Activated naive CD4-positive, alpha-beta T cell treated with anti-CD3 and anti-CD28 coated beads, Interleukin-2, amount 10 ng/mL, durations not matched to agents 7 days and 5 days (primary cell): ENCODE measurements at regions of chr12 and their contacts with region 1.

Region 1: GRCh38 chr12:810671-811415 is 58.5 kb downstream of the WNK1 start:
- DNase-seq: no peak
- H3K4me3 Mint-ChIP-seq: no peak overlapping the region
- H3K27ac Mint-ChIP-seq: no peak overlapping the region
- H3K4me1 Mint-ChIP-seq: peaks cover 64% of the 10 kb centered on the region
- H3K27me3 Mint-ChIP-seq: no peaks in the 10 kb centered on the region

Region 2: GRCh38 chr12:569803-570434 is 240.9 kb before region 1 on chr12:
- CTCF ChIA-PET with region 1: interaction called, 72 read pairs
- DNase-seq: peak; percentile 90
- H3K4me3 Mint-ChIP-seq: peak overlapping the region; percentile 78
- H3K27ac Mint-ChIP-seq: no peak overlapping the region
- H3K4me1 Mint-ChIP-seq: peaks cover 78% of the 10 kb centered on the region
- H3K27me3 Mint-ChIP-seq: peaks cover 3% of the 10 kb centered on the region

Region 3: DNA sequence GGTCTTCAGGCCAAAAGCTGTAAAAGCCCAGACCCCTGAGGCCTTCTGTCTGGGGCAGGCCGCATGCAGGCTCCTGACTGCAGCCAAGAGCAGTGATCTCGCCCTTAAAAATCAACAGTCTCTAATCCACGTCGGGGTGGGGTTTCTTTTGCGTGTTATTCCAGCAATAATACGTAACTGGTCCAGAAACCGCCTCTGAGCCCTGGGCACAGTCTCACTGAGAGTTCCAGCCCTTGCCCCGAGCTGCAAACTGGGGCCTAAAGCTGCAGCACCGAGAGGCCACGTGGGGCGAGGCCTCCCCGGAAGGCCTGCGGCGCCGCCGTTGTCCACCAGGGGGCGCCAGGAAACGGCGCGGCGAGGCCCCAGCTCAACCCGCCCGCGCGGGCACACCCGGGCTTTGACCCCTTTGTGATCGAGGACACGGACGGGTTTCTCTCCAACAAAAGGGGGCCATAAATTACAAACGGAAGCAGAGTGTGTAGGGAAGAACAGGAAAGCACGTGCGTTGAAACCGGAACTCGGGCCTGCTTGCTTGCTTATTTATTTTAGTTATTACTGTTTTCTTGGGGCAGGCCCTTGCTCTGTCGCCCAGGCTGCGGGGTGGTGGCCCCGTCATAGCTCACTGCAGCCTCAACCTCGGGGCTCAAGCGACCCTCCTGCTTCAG is 234.8 kb before region 1 on chr12:
- CTCF ChIA-PET with region 1: interaction called, 72 read pairs
- DNase-seq: peak; percentile 82
- H3K4me3 Mint-ChIP-seq: peak overlapping the region; percentile 24
- H3K27ac Mint-ChIP-seq: peak overlapping the region; percentile 29
- H3K4me1 Mint-ChIP-seq: peaks cover 45% of the 10 kb centered on the region
- H3K27me3 Mint-ChIP-seq: peaks cover 15% of the 10 kb centered on the region

Region 4: DNA sequence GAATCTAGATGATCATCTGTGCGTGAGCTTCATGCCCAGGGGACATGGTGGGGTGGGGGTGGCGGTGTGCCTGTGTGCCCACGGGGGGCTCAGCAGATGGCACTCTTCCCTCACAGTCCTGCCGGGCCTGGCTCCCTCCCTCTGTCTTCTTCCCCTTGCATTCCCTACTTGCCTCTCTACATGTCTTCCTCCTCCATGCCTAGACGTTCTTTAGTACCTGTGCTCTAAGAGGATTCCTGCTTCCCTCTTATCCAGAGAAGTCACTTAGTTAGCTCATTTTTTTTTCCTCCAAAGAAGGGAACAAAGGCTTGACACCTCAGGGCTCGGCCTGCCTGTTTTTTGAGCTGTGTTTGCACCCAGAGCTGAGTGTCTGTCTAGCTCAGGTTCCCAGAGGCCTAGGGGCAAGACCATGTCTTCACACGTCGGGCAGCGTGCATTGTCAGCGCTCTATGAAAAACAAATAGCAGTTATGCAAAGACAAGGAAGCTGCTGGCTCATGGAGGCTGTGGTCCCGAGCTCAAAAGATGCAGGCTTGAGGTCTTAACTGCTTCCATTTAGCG is 196.4 kb before region 1 on chr12:
- CTCF ChIA-PET with region 1: interaction called, 53 read pairs
- DNase-seq: peak; percentile 53
- H3K4me3 Mint-ChIP-seq: no peak overlapping the region
- H3K27ac Mint-ChIP-seq: no peak overlapping the region
- H3K4me1 Mint-ChIP-seq: peaks cover 51% of the 10 kb centered on the region
- H3K27me3 Mint-ChIP-seq: peaks cover 15% of the 10 kb centered on the region

Region 5: GRCh38 chr12:761256-761655 is 49.6 kb before region 1 on chr12:
- CTCF ChIA-PET with region 1: interaction called, 10 read pairs
- DNase-seq: no peak
- H3K4me3 Mint-ChIP-seq: no peak overlapping the region
- H3K27ac Mint-ChIP-seq: no peak overlapping the region
- H3K4me1 Mint-ChIP-seq: peaks cover 54% of the 10 kb centered on the region
- H3K27me3 Mint-ChIP-seq: no peaks in the 10 kb centered on the region